ENCODE measurements at regions of chr4 and their contacts with region 1.

Region 1: GRCh38 chr4:55078987-55079386 is 46.4 kb downstream of the KDR start:
- DNase-seq: peak; percentile 75
- ATAC-seq: peak; percentile 85

Region 2: DNA sequence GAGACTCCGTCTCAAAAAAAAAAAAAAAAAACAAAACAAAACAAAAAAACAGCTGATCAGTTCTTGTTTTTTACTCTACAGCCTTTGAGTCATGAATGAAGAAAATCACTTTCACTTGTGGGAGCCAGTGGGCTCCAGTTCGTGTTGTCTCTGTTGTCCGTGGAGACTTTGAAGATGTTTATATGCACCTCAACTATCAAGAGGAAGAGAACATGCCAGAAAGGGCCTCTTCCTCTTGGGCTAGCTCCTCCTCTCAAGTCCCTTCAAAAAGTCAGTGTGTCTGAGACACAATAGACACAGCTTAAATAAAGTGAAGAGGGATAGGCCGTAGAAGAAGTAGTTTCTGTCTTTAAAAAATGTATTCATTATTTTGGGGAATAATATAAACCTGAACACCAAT is 136.3 kb before region 1 on chr4:
- intact Hi-C with region 1: no loop called
- DNase-seq: no peak
- ATAC-seq: no peak

Region 3: DNA sequence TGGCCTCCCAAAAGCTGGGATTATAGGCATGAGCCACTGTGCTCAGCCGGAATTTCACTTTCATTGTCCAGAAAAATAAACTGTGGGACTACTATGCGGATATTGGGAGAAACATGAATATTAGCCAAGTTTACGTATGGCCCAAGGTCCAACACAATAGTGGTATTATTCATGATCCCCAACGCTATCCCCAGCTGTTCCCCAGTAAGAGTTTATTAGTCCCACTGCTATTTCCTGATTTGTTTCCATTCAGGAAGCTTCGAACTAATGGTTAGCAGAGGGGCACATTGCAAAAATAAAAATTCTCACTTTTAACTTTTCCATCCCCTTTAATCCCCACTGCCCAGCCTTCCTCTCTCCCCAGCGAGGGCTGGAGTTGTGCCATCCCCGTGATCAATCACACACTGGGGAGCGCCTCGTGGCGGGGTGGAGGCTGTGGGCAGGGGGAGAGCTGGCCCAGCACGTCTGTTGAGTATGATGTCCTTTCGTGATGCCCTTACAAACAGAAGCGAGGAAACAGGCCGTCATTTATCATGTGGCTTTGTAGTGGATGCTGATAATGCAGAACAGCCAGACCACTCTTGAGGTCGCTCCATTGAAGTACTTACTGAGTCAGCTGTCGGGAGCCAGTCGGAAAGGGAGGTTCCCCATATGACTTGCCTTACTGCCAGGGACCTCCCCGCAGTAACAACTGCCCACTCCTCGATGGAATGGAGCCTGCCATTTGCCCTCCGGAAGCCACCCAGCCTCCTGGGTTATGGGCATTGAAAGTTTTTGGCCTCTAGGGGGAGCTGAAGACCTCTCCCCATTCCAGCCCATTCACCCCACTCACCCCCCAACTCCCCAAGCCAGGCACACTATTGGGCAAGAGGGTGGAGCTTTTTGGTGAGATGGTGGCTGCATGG is 70.6 kb before region 1 on chr4:
- intact Hi-C with region 1: loop called (anchors 5 kb)
- DNase-seq: no peak
- ATAC-seq: no peak

Region 4: DNA sequence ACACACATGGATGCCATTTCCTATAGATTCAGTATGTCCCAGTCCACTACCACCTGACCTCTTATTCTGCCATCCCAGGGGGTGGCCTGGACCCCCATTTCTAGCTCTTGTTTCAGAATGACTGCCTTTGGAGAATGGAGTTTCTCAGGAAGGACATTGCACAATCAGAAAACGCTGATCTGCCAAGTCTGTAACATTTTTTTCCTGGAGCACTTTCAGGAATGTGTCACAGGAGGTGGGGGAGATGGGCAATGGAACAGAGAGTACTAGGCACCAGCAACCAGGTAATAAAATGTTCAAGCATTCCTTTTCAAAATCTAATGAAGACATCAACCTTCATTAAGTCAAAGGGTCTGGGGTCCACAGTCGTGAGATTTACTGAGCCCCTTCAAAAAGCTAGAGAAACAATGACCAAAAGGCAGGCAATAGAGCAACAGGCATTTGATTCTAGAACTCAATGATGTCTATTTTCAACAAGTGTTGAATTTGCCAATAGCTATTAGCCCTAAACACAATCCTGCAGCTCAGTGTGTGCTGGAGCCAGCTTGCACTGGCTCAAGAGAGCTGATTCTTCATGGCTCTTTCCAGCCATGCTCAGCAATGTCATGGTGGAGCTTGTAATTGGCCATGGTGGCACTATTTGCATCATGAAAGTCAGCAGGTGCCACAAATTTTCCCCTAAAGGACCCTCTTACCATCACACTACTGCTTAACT is 40.7 kb before region 1 on chr4:
- intact Hi-C with region 1: loop called (anchors 5 kb)
- DNase-seq: peak; percentile 55
- ATAC-seq: peak; percentile 95

Region 5: DNA sequence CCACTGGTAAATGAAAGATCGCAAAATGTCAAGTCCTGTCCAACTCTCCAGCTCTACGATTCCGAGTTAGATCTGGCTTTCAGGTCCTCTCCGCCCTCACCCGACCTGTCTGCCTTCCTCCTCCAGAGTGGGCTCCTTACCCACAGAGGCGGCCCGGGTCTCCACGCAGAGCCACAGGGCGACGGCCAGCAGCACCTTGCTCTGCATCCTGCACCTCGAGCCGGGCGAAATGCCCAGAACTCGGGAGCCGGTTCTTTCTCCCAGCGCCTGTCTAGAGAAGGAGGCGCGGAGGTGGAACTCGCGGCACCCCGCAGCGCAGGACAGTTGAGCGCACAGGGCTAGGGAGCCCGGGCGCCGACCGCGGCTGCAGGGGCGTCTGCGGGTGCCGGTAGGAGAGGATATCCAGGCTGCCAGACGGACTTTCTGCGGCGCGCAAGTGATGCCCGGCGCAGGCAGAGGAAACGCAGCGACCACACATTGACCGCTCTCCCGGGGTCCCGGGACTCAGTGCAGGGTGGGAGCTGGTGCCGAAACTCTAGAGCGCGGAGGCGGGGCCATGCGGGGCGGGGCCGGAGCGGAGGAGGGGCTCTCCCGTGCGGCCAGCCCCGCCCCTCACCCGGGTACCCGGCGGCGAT is 46.2 kb after region 1 on chr4 and contains the start of gene KDR:
- intact Hi-C with region 1: loop called (anchors 5 kb)
- DNase-seq: peak; percentile 72
- ATAC-seq: peak; percentile 88
- total RNA-seq, gene KDR: 23.2 TPM

Region 6: DNA sequence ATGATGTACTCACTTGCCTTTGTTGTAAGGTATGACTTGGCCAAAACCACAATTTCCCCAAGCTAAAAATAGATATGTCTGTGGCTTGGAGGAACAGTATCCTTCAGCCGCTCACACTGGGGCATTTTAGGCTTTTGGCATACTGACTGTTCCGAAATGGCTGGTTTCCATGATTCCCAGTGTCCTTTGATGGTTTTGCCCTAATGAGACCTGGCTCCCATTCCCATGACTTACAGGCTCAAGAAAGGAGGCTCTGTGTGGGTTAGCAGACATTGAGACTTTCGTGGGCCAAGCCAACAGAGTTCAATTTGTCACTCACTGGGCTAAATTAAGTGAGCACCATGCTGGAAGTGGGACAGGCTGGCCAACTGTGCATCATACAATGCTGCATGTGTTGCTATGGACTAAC is 1020.4 kb after region 1 on chr4:
- intact Hi-C with region 1: no loop called
- DNase-seq: no peak
- ATAC-seq: no peak